ENCODE measurements at regions of chr2 and their contacts with region 1.

Region 1: DNA sequence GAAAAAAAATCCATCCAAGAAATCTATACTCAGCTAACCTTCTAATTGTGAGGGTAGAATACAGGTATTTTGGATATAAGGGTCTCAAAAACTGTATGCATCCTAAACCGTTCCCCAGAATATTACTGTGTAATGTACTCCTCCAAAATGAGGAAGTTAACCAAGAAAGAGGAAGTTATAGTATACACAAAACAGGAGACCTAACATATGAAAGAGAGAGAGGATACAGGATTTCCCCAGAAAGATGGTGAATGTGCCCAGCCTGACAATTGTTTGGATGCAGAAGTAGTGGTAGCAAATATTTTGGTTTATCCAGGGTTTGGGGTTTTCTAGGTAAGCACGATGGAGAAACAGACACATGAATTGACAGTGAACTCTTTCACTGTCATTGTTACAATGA is 50.6 kb downstream of the GALNT3 start:
- DNase-seq: no peak
- ATAC-seq: peak; percentile 93
- H3K4me3 Mint-ChIP-seq: no peak overlapping the region
- H3K27ac Mint-ChIP-seq: peak overlapping the region; percentile 9
- H3K4me1 Mint-ChIP-seq: peaks cover 15% of the 10 kb centered on the region
- H3K27me3 Mint-ChIP-seq: no peaks in the 10 kb centered on the region
- CTCF ChIP-seq: no peak

Region 2: DNA sequence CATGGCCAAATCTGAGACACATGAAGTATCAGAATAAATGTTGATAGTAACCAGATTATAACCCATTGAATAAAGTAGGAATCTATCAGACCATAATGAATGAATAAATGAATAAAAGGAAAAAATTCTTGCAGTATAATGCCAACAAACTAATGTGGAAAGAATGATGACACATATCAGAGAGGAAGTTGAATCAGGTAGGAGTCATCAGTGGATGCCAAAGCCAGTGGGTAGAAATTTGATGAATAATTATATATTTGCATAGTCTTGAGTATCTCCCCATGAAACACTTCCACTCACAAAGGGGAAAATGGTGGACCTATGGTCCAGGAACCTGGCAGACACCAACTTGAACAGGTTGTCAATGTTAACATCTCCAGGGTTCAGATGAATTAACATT is 18.0 kb before region 1 on chr2:
- CTCF ChIA-PET with region 1: no interaction called
- POLR2A ChIA-PET with region 1: no interaction called
- intact Hi-C with region 1: no loop called
- DNase-seq: no peak
- ATAC-seq: no peak
- H3K4me3 Mint-ChIP-seq: no peak overlapping the region
- H3K27ac Mint-ChIP-seq: no peak overlapping the region
- H3K4me1 Mint-ChIP-seq: peaks cover 6% of the 10 kb centered on the region
- H3K27me3 Mint-ChIP-seq: peaks cover 12% of the 10 kb centered on the region
- CTCF ChIP-seq: no peak

Region 3: DNA sequence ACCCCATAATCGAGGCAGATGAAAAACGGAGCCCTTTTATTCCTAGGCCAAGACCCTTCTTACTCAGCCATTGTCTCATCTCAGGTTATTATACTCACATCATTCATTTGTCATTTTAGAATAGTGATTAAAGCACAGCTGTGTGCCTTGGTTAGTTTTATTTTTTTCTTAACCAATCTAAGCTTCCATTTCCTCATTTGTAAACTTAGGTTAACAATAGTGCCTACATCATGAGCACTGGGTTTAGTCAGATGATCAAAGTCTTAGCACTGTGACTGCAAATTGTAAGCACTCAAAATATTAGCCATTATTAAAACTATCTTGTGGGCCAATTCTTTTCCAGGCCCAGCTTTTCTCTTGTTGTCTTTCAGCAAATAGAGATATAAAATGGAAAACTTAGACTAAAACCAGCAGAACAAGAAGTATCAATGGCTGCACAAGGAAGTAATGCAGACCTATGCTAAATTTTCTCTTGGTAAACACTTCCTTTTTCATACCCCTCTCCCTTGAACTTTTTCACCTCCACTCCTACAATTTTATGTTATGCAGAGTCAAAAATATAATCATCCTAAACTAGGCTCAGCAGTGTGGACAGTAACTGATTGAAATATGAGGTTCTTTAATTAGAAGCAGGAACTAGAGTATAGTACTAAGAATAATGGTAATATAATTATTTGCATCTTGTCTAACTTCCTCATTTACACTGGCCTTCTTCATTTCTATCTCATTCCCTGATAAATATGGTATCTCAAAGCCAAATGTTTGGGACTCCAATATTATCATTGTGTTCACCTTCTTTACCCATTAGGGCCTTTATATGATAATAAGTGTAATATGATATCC is 72.1 kb after region 1 on chr2:
- CTCF ChIA-PET with region 1: no interaction called
- POLR2A ChIA-PET with region 1: no interaction called
- intact Hi-C with region 1: loop called (anchors 2 kb)
- DNase-seq: no peak
- ATAC-seq: peak; percentile 74
- H3K4me3 Mint-ChIP-seq: peak overlapping the region; percentile 56
- H3K27ac Mint-ChIP-seq: peak overlapping the region; percentile 84
- H3K4me1 Mint-ChIP-seq: peaks cover 58% of the 10 kb centered on the region
- H3K27me3 Mint-ChIP-seq: no peaks in the 10 kb centered on the region
- CTCF ChIP-seq: no peak